ENCODE measurements at regions of chr14 and their contacts with region 1.

Region 1: DNA sequence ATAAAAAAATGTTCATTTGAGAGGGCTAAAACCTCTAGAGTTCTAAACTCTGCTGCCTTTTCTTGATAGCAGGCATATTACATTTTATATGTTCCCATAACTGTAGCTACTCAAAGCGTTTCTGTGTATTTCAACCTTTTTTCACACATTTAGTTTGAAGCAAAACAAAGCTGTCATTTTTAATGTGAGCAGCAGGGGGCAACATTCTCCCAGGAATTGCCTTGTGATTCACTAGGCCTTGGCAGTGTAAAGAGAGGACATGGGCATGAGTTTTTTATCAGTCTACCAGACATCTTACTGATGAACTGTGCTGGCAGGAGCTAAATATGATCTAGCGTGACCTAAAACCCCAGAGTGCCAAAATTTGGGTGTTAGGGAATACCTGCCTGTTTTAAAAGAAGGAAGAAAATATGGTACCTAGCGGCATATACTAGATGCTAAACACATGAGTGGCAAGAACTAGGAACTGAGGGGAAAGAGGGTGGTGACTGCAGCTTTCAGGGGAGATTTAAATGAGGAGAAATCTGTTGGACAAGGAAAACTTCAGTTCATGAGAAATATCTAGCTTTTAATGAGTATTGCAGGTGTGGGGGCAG is 65.3 kb downstream of the IFT43 start:
- DNase-seq: peak in 1 of 2 donors; percentile 43
- H3K4me3 ChIP-seq: no peak overlapping the region
- H3K27ac ChIP-seq: no peak overlapping the region
- H3K4me1 ChIP-seq: no peaks in the 10 kb centered on the region
- H3K27me3 ChIP-seq: no peaks in the 10 kb centered on the region
- CTCF ChIP-seq: peak; percentile 60 to 80

Region 2: DNA sequence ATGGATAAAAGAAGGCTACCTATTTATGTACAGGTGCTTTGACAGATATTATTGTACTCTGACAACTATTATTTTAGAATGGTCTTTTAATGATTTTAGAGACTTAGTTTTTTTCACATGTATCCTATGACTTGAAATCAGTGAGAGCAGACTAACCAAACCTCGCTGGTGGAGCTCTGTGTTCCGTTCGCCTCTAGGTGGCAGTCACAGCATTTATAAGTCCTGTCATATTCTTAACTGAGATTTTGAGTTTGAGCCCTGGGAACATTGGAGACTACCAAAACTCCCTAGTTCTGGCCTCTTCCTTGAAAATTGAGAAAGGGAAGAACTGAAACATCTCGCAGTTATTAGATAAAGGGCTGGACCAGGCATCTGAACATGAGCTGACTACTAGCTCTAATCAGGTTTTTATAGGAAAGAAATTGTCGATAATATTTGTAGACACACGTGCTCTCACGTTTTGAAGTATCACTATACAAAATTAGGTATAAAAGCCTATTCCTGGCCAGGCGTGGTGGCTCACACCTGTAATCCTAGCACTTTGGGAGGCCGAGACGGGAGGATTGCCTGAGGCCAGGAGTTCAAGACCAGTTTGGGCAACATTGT is 341.6 kb before region 1 on chr14:
- intact Hi-C with region 1: loop called (anchors 10 kb)
- DNase-seq: peak; percentile 80 to 82
- H3K4me3 ChIP-seq: no peak overlapping the region
- H3K27ac ChIP-seq: no peak overlapping the region
- H3K4me1 ChIP-seq: peaks cover 0 to 15% (median 11%) of the 10 kb centered on the region in 4 donors
- H3K27me3 ChIP-seq: no peaks in the 10 kb centered on the region
- CTCF ChIP-seq: peak; percentile 77 to 81

Region 3: GRCh38 chr14:75832621-75833302 is 218.1 kb before region 1 on chr14:
- intact Hi-C with region 1: no loop called
- DNase-seq: no peak
- H3K4me3 ChIP-seq: no peak overlapping the region
- H3K27ac ChIP-seq: no peak overlapping the region
- H3K4me1 ChIP-seq: peaks cover 0 to 11% (median 1%) of the 10 kb centered on the region in 4 donors
- H3K27me3 ChIP-seq: no peaks in the 10 kb centered on the region
- CTCF ChIP-seq: no peak

Region 4: GRCh38 chr14:76063327-76063726 is 12.4 kb after region 1 on chr14:
- intact Hi-C with region 1: no loop called
- DNase-seq: no peak
- H3K4me3 ChIP-seq: no peak overlapping the region
- H3K27ac ChIP-seq: no peak overlapping the region
- H3K4me1 ChIP-seq: no peaks in the 10 kb centered on the region
- H3K27me3 ChIP-seq: no peaks in the 10 kb centered on the region
- CTCF ChIP-seq: no peak

Region 5: DNA sequence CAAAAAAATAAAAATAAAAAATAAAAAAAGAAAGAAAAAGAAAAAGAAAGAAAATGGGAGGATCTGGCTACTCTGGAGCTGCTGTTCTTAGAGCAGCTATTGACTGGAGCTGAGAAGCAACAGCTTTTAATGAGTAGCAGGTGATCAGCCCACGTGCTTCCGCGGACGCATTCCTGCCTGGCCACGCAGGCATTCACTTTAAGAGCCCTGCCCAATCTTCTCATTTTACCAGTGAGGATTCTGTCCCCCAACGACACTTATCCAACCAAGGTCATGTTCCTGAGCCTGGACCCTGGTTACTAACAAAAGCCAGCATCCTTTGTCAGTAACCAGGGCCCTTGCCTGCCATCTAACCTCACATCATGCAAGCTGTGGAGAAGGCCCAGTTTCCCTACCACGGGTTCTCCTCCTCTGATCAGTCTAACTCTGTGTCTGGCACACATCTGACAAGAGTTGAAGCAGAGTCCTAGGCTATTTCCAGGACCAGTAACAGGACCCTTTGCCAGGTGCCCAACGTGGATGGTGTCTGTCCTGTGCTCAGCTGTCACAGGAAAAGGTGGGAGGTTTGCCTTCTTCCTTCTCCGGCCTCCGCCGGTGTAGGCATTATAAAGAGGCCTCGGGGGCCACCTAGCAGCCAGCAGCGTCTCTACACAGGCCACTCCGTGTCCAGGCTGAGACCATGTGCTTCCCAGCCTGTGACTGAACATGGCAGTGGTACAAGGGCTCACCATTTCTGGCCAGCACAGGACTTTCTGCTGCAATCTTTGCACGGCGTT is 39.9 kb after region 1 on chr14:
- intact Hi-C with region 1: no loop called
- DNase-seq: peak; percentile 48 to 74
- H3K4me3 ChIP-seq: no peak overlapping the region
- H3K27ac ChIP-seq: no peak overlapping the region
- H3K4me1 ChIP-seq: peaks cover 0 to 5% (median 0%) of the 10 kb centered on the region in 4 donors
- H3K27me3 ChIP-seq: no peaks in the 10 kb centered on the region
- CTCF ChIP-seq: peak; percentile 17 to 31

Region 6: GRCh38 chr14:76352639-76353281 is 301.9 kb after region 1 on chr14:
- intact Hi-C with region 1: loop called (anchors 2 kb)
- DNase-seq: no peak
- H3K4me3 ChIP-seq: peak overlapping the region; percentile 21 to 47
- H3K27ac ChIP-seq: no peak overlapping the region
- H3K4me1 ChIP-seq: peaks cover 0 to 8% (median 5%) of the 10 kb centered on the region in 4 donors
- H3K27me3 ChIP-seq: peaks cover 0 to 20% of the 10 kb centered on the region in 2 donors
- CTCF ChIP-seq: peak; percentile 67 to 80

Region 7: GRCh38 chr14:76386915-76387782 is 336.3 kb after region 1 on chr14:
- intact Hi-C with region 1: loop called (anchors 10 kb)
- DNase-seq: peak; percentile 36 to 78
- H3K4me3 ChIP-seq: no peak overlapping the region
- H3K27ac ChIP-seq: no peak overlapping the region
- H3K4me1 ChIP-seq: no peaks in the 10 kb centered on the region
- H3K27me3 ChIP-seq: peaks cover 0 to 30% of the 10 kb centered on the region in 2 donors
- CTCF ChIP-seq: peak; percentile 85

Measured in tibial artery (tissue), 4 donors.